ENCODE measurements at regions of chr14 and their contacts with region 1.

Region 1: GRCh38 chr14:64628940-64629408 is 75.2 kb upstream of the PLEKHG3 start:
- DNase-seq: peak; percentile 96
- H3K4me3 ChIP-seq: no peak overlapping the region
- CTCF ChIP-seq: peak; percentile 24

Region 2: GRCh38 chr14:64089920-64090319 is 539.1 kb before region 1 on chr14:
- CTCF ChIA-PET with region 1: no interaction called
- POLR2A ChIA-PET with region 1: no interaction called
- DNase-seq: no peak
- H3K4me3 ChIP-seq: no peak overlapping the region
- CTCF ChIP-seq: no peak

Region 3: GRCh38 chr14:64503478-64504309 is 125.3 kb before region 1 on chr14 and contains the start of gene ZBTB25:
- CTCF ChIA-PET with region 1: no interaction called
- POLR2A ChIA-PET with region 1: interaction called, 10 read pairs
- DNase-seq: peak; percentile 58
- H3K4me3 ChIP-seq: peak within 1 kb of the TSS; percentile 86
- CTCF ChIP-seq: no peak

Region 4: GRCh38 chr14:64520701-64521100 is 108.3 kb before region 1 on chr14:
- CTCF ChIA-PET with region 1: no interaction called
- POLR2A ChIA-PET with region 1: no interaction called
- DNase-seq: no peak
- H3K4me3 ChIP-seq: no peak overlapping the region
- CTCF ChIP-seq: no peak

Region 5: GRCh38 chr14:64612021-64612380 is 17.0 kb before region 1 on chr14:
- CTCF ChIA-PET with region 1: interaction called, 10 read pairs
- POLR2A ChIA-PET with region 1: interaction called, 7 read pairs
- DNase-seq: peak; percentile 63
- H3K4me3 ChIP-seq: no peak overlapping the region
- CTCF ChIP-seq: no peak

Region 6: GRCh38 chr14:64645220-64645892 is 16.4 kb after region 1 on chr14:
- CTCF ChIA-PET with region 1: interaction called, 18 read pairs
- POLR2A ChIA-PET with region 1: interaction called, 3 read pairs
- DNase-seq: peak; percentile 98
- H3K4me3 ChIP-seq: no peak overlapping the region
- CTCF ChIP-seq: no peak

Region 7: DNA sequence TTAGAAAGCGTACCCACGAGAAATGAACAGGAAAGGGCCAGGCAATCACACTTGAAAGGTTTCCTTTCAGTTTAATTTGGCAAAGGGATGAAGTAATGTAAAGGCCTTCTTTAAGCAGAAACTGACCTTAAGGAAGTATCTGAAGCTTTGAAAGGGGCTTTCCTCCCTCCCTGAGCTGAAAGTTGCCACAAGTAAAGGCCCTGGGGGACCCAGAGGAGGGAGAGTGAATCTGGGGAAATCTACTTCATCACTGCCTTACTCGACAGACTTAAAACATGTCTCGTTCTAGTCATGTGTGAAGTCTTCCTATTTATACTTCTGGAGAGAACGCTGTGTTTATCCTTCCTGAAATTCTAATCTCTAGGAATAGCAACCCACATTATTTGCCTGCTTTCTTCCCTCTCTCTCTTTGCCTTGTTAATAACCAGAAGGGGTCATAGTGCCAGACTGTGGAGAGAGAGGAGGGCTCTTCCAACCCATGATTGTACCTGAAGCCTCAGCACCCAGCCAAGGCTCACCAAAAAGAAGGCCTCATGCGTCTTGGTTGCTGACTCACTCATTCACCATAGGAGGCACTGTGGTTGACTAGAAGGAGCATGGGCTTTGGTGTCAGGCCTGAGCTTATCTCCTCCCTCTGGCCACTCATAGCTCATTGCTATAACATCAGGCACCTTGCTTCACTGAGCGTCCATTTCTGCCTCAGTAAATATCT is 323.8 kb after region 1 on chr14:
- CTCF ChIA-PET with region 1: no interaction called
- POLR2A ChIA-PET with region 1: no interaction called
- DNase-seq: no peak
- H3K4me3 ChIP-seq: no peak overlapping the region
- CTCF ChIP-seq: no peak